ENCODE measurements at regions of chr4 and their contacts with region 1.

Region 1: DNA sequence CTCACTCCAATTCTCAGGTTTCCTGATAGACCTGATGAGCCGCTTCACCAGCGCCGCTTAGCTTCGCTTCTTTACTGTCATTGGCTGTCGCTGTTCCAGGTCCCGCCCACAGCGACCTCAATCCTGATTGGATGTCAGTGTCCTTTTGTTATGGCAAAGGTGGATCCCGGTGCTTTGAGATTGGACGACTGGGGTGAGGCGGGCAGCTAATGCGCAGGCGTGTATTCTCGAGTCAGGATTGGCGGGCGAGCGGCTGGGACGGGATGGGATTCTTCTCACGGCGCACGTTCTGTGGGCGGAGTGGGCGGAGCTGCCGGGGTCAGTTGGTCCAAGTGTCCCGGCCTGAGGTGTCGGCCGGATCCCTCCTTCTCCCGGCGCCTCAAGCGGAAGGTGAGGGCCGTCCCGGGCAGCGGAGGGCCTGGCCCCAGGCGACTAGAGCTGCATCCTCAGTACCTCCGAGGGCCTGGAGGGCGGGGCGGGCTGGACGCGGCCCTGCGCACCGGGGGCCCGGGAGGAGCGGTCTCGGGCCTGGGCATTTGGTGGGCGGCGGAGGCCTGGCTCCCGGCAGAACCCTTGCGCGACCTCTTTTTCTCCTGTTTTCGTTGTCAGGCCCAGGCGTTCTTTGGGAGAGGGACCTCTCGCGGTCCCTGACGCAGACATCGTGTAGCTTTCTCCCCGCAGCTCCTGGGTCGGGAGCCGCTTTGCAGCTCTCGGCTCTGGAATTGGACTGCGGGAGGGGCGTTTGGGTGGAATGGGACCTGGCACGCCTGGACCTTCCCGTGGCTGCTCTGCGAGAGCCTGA is at the start of gene SCOC:
- DNase-seq: peak; percentile 92 to 98
- ATAC-seq: peak; percentile 93 to 98 (median 94)
- H3K4me3 ChIP-seq: peak within 1 kb of the TSS; percentile 76
- H3K4me3 Mint-ChIP-seq: peak within 1 kb of the TSS; percentile 83
- H3K27ac ChIP-seq: peak within 1 kb of the TSS; percentile 75
- H3K27ac Mint-ChIP-seq: no peak within 1 kb of the TSS
- H3K4me1 ChIP-seq: peaks cover 7% of the 10 kb centered on the region
- H3K4me1 Mint-ChIP-seq: peaks cover 29 to 36% of the 10 kb centered on the region in 2 donors
- H3K27me3 ChIP-seq: no peaks in the 10 kb centered on the region
- H3K27me3 Mint-ChIP-seq: no peaks in the 10 kb centered on the region
- CTCF ChIP-seq: peak; percentile 3
- total RNA-seq, gene SCOC: 8.6 to 10.3 (median 9.4) TPM

Region 2: DNA sequence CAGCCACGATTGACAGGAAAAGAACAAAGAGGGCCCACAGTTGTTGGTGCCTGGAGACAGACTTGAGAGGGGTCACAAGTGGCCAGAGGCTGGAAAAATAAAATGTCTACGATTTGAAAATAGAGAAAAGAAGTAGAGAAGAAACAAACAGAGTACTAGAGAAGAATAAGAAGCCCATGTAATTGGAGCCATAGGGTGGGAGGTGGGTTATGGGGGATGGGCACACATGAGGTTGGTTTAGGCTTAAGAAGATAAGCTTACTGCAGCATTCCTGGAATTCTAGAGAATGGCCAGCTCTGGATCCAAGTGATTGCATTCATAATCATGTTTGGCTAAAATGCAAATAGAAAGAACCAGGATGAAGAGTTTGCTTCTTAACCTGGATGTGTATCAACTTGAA is 430.3 kb before region 1 on chr4:
- intact Hi-C with region 1: no loop called
- DNase-seq: no peak
- ATAC-seq: no peak
- H3K4me3 ChIP-seq: no peak overlapping the region
- H3K4me3 Mint-ChIP-seq: no peak overlapping the region
- H3K27ac ChIP-seq: no peak overlapping the region
- H3K27ac Mint-ChIP-seq: no peak overlapping the region
- H3K4me1 ChIP-seq: no peaks in the 10 kb centered on the region
- H3K4me1 Mint-ChIP-seq: peaks cover 6% of the 10 kb centered on the region in 2 donors
- H3K27me3 ChIP-seq: no peaks in the 10 kb centered on the region
- H3K27me3 Mint-ChIP-seq: peaks cover 19 to 33% of the 10 kb centered on the region in 2 donors
- CTCF ChIP-seq: no peak

Region 3: DNA sequence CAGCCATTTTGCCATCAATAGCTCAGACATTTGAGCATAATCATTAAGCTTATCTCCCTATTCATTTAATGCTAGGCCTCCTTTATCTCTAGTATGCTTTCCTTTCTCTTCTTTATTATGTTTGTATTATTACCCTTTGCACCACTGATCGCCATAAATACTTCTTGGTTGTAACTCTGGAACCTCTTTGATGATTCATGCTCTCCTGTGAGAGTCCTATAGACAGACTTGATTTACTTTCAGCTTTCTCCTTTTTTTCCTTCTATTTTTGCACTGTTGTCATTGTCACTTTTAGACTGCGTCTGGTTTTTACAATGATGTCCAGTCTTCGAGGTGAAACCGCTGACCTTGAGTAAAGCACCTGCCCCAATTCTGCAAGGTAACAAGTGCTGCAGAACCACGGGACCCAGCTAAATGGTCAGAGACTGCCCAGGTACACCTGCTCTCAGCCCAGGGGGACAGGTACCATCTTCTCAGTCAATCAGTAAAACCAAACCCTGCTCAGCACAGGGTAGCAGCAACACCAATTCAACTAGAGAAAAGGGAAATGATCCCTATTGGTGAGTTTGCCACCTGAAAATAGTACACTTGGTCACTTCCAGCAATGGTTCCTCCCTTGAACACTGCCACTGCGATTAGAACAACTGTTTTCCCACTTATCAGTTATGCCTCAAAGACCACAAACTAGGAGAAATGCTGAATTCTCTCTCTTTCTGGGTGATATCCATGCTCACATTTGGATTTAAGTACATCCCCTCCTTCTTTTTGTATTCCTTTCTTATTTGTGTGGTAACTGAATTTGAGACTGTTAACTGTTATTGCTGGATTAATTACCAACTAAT is 344.6 kb before region 1 on chr4:
- intact Hi-C with region 1: no loop called
- DNase-seq: no peak
- ATAC-seq: no peak
- H3K4me3 ChIP-seq: no peak overlapping the region
- H3K4me3 Mint-ChIP-seq: no peak overlapping the region
- H3K27ac ChIP-seq: no peak overlapping the region
- H3K27ac Mint-ChIP-seq: no peak overlapping the region
- H3K4me1 ChIP-seq: no peaks in the 10 kb centered on the region
- H3K4me1 Mint-ChIP-seq: no peaks in the 10 kb centered on the region
- H3K27me3 ChIP-seq: no peaks in the 10 kb centered on the region
- H3K27me3 Mint-ChIP-seq: peaks cover 35 to 42% of the 10 kb centered on the region in 2 donors
- CTCF ChIP-seq: no peak

Region 4: DNA sequence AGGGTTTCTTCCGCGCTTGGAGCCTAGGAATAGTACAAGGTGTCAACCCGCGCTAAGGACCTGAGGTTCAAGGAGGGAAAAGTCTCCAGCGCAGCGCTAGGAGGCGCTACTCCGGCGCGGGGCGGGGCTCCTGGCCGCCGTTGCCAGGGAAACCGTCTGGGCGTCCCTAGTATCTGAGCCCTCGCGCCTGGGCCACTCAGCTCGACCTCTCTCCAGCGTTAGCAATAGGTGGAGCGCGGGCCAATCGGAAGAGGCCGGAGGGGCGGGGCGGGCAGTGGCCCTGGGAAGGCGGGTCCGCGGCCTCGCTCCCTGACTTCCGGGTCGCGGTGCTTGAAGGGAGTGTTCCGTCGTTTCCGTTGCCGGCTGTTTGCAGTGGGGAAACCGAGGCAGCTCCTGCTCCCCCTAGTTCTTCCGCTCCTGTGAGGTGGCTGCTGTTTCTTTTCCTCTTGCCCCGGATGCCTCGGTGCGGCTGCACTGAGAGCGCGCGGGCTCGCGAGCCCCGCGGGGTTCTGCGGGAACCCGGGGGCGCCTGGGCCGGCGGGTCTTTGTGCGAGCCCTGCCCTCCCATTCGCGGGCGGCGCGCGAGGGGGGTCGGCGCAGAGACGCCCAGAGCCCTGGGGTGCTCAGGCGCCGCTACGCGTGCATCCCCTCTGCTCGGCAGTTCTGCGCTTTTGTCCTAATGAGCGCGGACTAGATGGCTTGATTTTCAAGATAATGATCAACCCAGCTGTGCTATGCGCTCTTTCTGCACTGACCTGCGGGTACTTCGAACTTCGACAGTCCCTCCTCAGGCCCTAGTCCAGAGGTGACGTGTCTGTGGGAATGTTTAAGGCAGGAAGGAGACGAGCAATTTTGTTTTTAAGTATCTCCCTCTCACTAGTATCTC is 150.6 kb after region 1 on chr4 and contains the start of gene ELMOD2:
- intact Hi-C with region 1: loop called (anchors 1 kb)
- DNase-seq: peak; percentile 96 to 98
- ATAC-seq: peak; percentile 99 to 100 (median 99)
- H3K4me3 ChIP-seq: peak within 1 kb of the TSS; percentile 56
- H3K4me3 Mint-ChIP-seq: peak within 1 kb of the TSS; percentile 89
- H3K27ac ChIP-seq: peak within 1 kb of the TSS; percentile 60
- H3K27ac Mint-ChIP-seq: peak within 1 kb of the TSS; percentile 78 to 88
- H3K4me1 ChIP-seq: peaks cover 3% of the 10 kb centered on the region
- H3K4me1 Mint-ChIP-seq: peaks cover 12 to 22% of the 10 kb centered on the region in 2 donors
- H3K27me3 ChIP-seq: no peaks in the 10 kb centered on the region
- H3K27me3 Mint-ChIP-seq: no peaks in the 10 kb centered on the region
- CTCF ChIP-seq: peak; percentile 97
- total RNA-seq, gene ELMOD2: 17.9 to 22.6 (median 18.4) TPM

Region 5: DNA sequence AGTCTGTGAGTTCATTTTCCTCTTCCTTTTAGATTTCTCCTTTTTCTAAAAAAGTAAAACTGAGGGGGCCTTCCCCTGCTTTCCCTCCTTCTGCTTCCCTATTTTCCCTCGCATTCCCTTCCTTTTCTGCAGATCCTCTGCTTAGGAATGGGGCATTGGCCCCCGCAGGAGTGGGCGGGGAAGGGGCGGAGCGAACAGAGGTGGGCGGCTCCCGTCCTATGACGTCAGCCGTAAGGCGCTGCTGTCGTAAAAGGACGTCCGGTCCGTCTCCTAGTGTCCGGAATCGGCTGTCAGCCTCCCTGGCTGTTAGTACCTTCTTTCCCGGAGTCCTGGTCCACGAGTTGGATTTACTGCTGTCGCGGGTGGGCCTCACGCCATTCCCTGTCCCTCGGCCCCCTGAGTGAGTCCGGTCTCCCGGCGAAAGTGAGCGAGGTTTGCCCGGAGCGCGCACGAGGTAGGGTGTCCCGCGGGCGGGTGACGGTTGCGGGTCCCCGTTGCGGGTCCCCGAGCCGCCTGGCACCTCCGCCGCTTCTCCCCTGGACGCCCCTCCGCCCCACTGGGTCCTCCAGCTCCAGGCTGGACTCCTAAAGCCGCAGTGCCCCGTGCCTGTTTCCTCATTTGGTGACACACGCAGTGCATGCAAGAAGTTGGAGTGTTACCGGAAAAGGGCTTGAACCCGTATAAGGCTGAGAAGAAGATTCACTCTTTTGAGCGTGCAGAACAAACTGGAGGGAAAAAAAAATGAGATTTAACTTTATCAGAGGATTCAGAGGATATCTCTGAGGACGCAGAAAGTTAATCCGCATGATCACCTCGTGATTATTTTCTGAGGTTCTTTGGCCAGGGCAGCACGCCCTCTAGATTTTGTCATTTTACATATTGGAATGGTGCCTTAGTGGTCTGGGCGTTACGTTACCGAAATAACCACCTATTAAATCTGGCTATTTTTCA is 847.4 kb after region 1 on chr4 and contains the start of gene ZNF330:
- intact Hi-C with region 1: loop called (anchors 5 kb)
- DNase-seq: peak; percentile 93 to 94
- ATAC-seq: peak; percentile 89 to 95 (median 91)
- H3K4me3 ChIP-seq: peak within 1 kb of the TSS; percentile 64
- H3K4me3 Mint-ChIP-seq: peak within 1 kb of the TSS; percentile 98
- H3K27ac ChIP-seq: peak within 1 kb of the TSS; percentile 75
- H3K27ac Mint-ChIP-seq: peak within 1 kb of the TSS; percentile 92 to 93
- H3K4me1 ChIP-seq: peaks cover 8% of the 10 kb centered on the region
- H3K4me1 Mint-ChIP-seq: peaks cover 27 to 40% of the 10 kb centered on the region in 2 donors
- H3K27me3 ChIP-seq: no peaks in the 10 kb centered on the region
- H3K27me3 Mint-ChIP-seq: peaks cover 6 to 18% of the 10 kb centered on the region in 2 donors
- CTCF ChIP-seq: no peak
- total RNA-seq, gene ZNF330: 25.3 to 34.8 (median 34.7) TPM

Measured in natural killer cell (primary cell).